Posterior cingulate gyrus (tissue), 11 donors: ENCODE measurements at regions of chr1 and their contacts with region 1.

Region 1: GRCh38 chr1:177170756-177171535 is at the start of gene BRINP2:
- DNase-seq: peak; percentile 78 to 99 (median 90)

Region 2: DNA sequence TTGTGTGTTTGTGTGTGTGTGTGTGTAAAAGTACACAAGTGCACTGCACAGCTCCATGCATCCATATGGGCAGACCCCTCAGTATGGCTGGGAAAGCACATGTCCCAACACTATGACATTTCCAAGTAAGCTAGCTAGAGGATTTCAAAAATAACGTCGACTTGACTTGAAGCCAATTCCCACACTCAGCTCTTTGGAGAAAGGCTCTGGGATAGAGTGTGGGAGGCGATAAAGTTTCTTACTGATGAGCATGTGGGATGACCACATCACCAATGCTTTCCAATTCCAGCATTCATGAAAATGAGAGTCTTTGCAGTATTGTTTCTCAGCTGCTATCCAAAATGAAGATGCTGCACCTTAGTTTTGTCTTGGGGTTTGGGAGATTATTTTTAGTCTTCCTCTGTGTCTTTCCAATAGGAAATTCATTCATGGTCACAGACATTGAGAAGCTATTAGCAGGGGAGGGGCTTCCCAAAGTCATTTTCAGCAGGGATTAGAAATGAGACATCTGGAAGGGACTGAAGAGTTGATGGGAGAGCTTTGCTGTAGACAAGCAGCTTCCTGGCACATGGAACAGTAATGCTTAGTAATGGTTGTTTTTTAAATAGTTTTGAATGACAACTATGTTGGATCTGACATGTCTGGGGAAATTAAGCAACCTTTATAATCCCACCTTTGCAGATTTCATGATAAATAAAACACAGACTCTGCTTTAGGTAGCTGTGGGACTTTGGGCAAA is 149.9 kb before region 1 on chr1:
- intact Hi-C with region 1: loop called (anchors 10 kb)
- DNase-seq: no peak